ENCODE measurements at regions of chr20 and their contacts with region 1.

Region 1: DNA sequence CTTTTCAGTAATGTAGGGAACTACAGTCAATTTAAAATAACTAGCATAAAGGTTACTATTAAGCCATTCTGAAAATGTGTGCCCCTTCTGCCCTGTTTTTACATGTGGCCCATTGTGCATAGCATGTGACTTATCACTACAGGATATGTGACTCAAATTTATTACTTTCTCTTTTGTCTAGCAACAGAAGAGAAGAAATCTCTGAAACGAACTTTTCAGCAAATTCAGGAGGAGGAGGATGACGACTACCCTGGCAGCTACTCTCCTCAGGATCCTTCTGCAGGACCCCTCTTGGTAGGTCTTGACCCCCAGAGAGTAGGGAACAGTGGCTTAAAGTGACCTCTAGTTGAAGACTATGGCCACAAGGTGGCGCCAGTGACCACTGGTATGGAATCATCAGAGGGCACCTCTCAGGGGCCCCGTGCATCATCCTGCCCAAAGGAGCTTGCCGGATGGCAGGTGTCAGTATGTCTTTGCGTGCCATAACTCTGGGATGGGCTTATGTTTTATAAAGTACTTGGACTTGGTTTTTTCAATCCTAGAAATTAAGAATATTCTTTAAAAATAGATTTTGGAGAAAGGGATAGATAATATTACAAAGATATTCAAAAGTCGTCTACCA is 23.9 kb downstream of the RPRD1B start:
- DNase-seq: peak; percentile 81 to 87
- H3K4me3 ChIP-seq: no peak overlapping the region
- H3K27ac ChIP-seq: no peak overlapping the region
- H3K4me1 ChIP-seq: no peaks in the 10 kb centered on the region
- H3K27me3 ChIP-seq: no peaks in the 10 kb centered on the region
- CTCF ChIP-seq: peak; percentile 60 to 82 (median 74)
- POLR2A ChIP-seq: no peak

Region 2: GRCh38 chr20:38165089-38165989 is 107.9 kb after region 1 on chr20 and contains the start of gene TGM2:
- intact Hi-C with region 1: loop called (anchors 5 kb)
- DNase-seq: peak; percentile 73 to 81
- H3K4me3 ChIP-seq: peak within 1 kb of the TSS in 1 of 3 donors; percentile 25
- H3K27ac ChIP-seq: peak within 1 kb of the TSS in 1 of 3 donors; percentile 14
- H3K4me1 ChIP-seq: peaks cover 0 to 28% of the 10 kb centered on the region in 2 donors
- H3K27me3 ChIP-seq: no peaks in the 10 kb centered on the region
- CTCF ChIP-seq: peak; percentile 70 to 91 (median 82)
- POLR2A ChIP-seq: no peak
- total RNA-seq, gene TGM2: 16.9 to 133 (median 18.4) TPM

Region 3: DNA sequence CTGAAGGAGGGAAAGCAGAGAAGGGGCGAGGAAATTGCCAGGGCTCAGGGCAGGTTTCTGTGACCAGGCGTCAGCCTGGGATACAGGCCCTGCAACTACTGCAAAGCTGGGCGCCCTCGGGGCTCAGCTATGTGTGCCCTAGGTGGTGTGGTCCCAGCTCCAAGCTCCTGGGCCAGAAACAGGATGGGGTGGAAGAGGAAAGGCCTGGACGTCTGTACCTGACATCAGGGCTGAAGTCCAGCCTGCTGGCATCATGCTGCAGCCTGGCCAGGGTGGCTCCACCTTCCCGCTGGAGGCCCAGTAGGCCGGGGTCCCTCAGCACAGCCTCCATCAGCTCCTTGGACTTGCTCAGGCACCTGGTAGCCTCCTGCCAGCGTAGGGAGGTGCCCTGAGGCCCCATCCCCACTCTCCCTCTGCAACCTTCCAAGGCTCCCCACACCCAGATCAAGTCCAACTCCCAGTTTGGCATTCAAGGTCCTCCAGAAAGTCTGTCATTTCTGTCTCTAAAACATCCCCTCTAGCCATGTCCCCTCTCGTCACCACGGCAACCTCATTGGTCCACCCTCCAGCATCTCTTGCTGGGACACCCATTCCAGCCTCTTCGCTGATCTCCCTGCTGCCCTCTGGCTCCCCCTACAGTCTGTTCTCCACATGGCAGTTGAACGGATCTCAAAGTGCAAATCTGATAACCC is 164.9 kb after region 1 on chr20:
- intact Hi-C with region 1: loop called (anchors 2 kb)
- DNase-seq: peak; percentile 42 to 49
- H3K4me3 ChIP-seq: no peak overlapping the region
- H3K27ac ChIP-seq: no peak overlapping the region
- H3K4me1 ChIP-seq: peaks cover 0 to 3% of the 10 kb centered on the region in 2 donors
- H3K27me3 ChIP-seq: no peaks in the 10 kb centered on the region
- CTCF ChIP-seq: peak; percentile 49 to 80 (median 58)
- POLR2A ChIP-seq: no peak

Region 4: GRCh38 chr20:38735172-38735571 is 677.7 kb after region 1 on chr20:
- intact Hi-C with region 1: no loop called
- DNase-seq: no peak
- H3K4me3 ChIP-seq: no peak overlapping the region
- H3K27ac ChIP-seq: no peak overlapping the region
- H3K4me1 ChIP-seq: peaks cover 8 to 16% of the 10 kb centered on the region in 2 donors
- H3K27me3 ChIP-seq: peaks cover 23% of the 10 kb centered on the region
- CTCF ChIP-seq: no peak
- POLR2A ChIP-seq: no peak

Measured in thyroid gland (tissue), 4 donors.